ENCODE measurements at regions of chr9 and their contacts with region 1.

Region 1: DNA sequence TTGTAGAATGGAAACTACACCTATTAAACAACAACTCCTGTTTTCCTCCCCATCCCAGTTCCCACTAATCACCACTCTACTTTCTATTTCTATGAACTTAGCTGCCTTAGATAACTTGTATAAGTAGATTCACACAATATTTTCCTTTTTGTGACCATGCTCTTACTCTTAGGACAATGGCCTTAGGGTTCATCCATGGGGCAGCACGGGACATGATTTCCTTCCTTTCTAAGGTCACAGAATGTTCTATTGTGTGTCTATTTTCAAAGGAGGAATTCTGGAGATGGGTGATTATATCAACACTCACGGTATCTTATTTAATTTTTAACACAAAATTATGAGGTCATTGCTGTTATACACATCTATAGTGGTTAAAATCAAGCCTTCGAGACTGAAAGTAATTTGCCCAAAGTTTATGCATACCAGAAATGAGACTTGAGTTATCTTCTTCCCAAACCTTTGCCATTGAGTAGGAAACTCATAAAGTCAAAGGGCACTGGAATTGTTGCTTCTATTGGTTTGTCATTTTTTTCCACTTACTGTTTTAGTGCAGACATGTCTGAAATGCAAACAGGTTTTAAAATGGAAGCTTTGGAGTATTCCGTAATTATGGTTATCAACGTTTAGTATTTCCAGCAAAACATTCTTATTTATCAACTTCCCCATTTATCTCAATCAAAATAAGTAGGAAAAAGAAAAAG is 23.6 kb downstream of the CTSL start:
- DNase-seq: no peak
- H3K4me3 ChIP-seq: no peak overlapping the region
- H3K27ac ChIP-seq: no peak overlapping the region
- H3K4me1 ChIP-seq: no peaks in the 10 kb centered on the region
- H3K27me3 ChIP-seq: no peaks in the 10 kb centered on the region
- CTCF ChIP-seq: no peak

Region 2: DNA sequence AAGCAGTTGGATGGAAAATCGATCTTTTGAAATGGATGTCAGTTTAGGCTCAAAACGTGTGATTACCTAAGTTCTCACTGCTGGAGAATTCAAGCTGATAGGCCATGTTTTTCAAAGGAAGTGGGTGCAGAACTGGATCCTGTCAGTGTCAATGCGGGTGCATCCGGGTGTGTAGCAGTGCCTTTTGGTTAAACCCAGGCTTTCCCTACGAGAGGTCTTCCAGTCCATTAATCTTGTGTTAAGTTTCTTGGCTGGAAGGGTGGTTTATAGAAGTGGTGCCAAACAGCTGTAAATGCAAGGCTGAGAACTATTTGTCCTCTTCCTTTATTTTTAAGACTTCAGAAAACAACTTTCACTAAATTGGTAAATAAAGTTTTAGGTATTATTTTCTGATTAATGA is 180.0 kb before region 1 on chr9:
- CTCF ChIA-PET with region 1: no interaction called
- dilution Hi-C with region 1: no loop called
- in situ Hi-C with region 1: no loop called
- intact Hi-C with region 1: no loop called
- DNase-seq: no peak
- H3K4me3 ChIP-seq: no peak overlapping the region
- H3K27ac ChIP-seq: no peak overlapping the region
- H3K4me1 ChIP-seq: no peaks in the 10 kb centered on the region
- H3K27me3 ChIP-seq: no peaks in the 10 kb centered on the region
- CTCF ChIP-seq: no peak

Region 3: GRCh38 chr9:87763286-87763685 is 13.8 kb after region 1 on chr9:
- CTCF ChIA-PET with region 1: no interaction called
- dilution Hi-C with region 1: no loop called
- in situ Hi-C with region 1: no loop called
- intact Hi-C with region 1: loop called (anchors 1 kb)
- DNase-seq: peak; percentile 90
- H3K4me3 ChIP-seq: no peak overlapping the region
- H3K27ac ChIP-seq: peak overlapping the region; percentile 70
- H3K4me1 ChIP-seq: peaks cover 40% of the 10 kb centered on the region
- H3K27me3 ChIP-seq: no peaks in the 10 kb centered on the region
- CTCF ChIP-seq: no peak

Region 4: GRCh38 chr9:87803622-87804345 is 54.3 kb after region 1 on chr9:
- CTCF ChIA-PET with region 1: no interaction called
- dilution Hi-C with region 1: loop called (anchors 5 kb)
- in situ Hi-C with region 1: no loop called
- intact Hi-C with region 1: no loop called
- DNase-seq: no peak
- H3K4me3 ChIP-seq: no peak overlapping the region
- H3K27ac ChIP-seq: no peak overlapping the region
- H3K4me1 ChIP-seq: peaks cover 6% of the 10 kb centered on the region
- H3K27me3 ChIP-seq: peaks cover 2% of the 10 kb centered on the region
- CTCF ChIP-seq: no peak

Measured in mammary epithelial cell (primary cell).